Activated CD8-positive, alpha-beta memory T cell treated with anti-CD3 and anti-CD28 coated beads, Interleukin-2, amount 10 ng/mL, durations not matched to agents 7 days and 5 days (primary cell): ENCODE measurements at regions of chr19 and their contacts with region 1.

Region 1: DNA sequence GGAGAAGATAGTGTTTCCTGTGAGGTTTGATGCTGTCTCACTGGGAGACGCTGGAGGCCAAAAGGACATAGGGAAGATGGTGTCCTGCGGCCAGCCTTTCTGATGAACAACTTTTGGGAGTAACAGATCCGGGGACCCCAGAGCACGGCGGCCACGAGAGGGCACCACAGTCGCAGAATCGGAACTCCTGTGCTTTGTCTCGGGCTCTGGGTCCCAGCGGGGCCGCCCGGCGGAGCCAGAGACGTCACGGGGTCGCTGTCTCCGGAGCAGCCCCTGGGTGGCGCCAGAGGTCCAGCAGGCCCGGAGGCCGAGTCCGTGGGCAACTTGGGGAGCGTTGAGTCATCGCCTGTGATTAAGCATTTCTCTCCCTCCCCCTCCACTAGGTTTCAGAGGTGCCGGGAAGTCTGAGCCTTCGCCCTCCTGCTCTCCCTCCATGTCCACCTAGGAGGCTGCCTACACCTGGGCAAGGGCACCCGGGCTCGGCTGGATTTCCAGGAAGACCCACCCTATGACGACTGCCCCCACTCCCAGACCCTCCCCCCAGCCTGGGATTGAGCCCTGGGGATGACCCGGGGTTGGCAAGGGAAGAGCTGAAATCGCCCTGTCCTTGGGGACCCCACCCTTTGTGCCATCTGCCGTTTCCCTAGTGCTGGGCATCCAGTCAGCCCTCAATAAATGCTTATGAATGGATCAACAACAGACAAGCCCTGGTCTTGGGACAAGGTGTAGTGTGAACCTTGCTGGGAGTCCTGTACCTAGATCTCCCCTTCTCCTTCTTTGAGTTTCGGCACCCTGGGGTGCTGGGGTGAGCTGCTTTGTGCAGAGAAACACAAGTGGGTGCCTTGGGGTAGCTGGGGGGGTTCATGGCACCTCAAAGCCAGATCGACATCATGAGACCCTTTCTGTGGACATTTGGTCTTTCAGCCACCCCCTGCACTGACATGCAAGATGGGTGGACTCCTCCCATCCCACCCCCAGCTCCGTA is 3.4 kb downstream of the NANOS3 start:
- DNase-seq: peak; percentile 99
- ATAC-seq: peak; percentile 98
- H3K4me3 Mint-ChIP-seq: peak overlapping the region; percentile 25
- H3K27ac Mint-ChIP-seq: peak overlapping the region; percentile 70
- H3K4me1 Mint-ChIP-seq: peaks cover 37% of the 10 kb centered on the region
- H3K27me3 Mint-ChIP-seq: peaks cover 9% of the 10 kb centered on the region

Region 2: DNA sequence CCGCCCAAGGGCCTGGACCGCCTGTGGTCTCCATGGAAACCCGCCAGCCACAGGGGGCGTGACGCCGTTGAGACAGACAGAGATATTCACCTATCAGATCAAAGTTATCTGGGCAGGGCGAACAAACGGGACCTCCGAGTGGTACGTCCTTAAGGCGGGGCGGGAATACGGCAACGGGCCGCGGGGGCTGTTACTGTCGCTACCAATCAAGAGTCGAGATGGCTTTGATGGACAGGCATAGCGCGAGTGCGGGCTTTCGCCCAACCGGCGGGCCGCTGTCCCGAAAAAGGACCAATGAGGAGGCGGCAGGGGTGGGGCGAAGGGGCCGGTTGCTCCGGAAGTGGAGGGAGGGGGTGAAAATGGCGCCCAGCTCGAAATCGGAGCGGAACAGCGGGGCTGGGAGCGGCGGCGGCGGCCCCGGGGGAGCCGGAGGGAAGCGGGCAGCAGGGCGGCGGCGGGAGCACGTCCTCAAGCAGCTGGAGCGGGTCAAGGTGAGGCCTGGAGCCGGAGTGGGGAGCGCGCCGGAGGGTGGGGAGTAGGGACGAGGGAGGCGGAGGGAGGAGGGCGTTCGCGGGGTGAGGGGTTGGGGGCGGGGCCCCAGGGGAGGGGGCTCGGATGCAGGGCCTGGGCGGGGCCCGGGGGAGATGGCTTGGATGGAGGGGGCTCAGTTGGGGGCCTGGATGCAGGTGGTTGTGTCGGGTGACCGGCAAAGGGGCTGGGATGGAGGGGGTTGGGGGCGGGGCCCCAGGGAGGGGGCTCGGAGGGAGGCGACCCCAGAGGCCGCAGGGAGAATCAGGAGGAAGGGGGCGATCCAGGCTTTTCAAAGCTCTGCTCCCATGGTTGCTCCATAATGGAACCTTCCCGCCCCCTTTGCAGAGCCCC is 72.0 kb after region 1 on chr19 and contains the start of gene DCAF15:
- CTCF ChIA-PET with region 1: interaction called, 25 read pairs
- DNase-seq: peak; percentile 100
- ATAC-seq: peak; percentile 99
- H3K4me3 Mint-ChIP-seq: peak within 1 kb of the TSS; percentile 92
- H3K27ac Mint-ChIP-seq: peak within 1 kb of the TSS; percentile 81
- H3K4me1 Mint-ChIP-seq: peaks cover 23% of the 10 kb centered on the region
- H3K27me3 Mint-ChIP-seq: no peaks in the 10 kb centered on the region
- total RNA-seq, gene DCAF15: 82.5 to 94.3 TPM

Region 3: DNA sequence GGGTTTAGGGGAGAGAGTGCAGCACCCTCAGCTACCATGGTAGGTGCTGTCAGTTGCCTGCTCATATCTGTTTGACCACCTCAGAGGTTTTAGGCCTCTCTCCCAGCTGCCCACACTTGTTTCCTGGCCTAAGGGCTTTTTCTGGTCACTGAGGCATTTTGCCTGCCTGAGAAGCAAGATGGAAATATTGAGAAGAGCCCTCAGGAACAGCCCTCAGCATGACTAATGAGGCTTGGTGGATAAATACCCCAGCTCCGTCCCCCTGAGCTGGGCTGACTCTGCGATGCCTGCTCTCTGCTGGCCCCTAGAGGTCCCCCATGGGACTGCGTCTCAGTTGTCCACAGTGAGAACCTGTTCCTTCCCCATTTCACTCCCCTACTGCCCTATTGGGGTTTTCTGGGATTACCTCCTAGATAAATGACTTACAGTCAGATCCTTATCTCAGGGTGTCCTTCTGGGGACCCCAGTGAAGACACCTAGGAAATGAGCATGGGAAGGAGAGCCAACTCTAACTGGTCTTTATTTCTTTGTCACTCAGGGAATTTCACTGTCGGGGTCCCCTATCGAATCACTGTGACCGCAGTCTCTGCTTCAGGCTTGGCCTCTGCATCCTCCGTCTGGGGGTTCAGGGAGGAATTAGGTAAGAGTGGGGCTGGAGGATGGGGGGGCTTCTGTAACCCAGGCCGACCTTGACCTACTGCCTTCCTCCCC is 168.2 kb after region 1 on chr19:
- CTCF ChIA-PET with region 1: interaction called, 25 read pairs
- DNase-seq: peak; percentile 79
- ATAC-seq: peak; percentile 79
- H3K4me3 Mint-ChIP-seq: no peak overlapping the region
- H3K27ac Mint-ChIP-seq: no peak overlapping the region
- H3K4me1 Mint-ChIP-seq: peaks cover 2% of the 10 kb centered on the region
- H3K27me3 Mint-ChIP-seq: no peaks in the 10 kb centered on the region

Region 4: GRCh38 chr19:14073261-14073924 is 193.0 kb after region 1 on chr19:
- CTCF ChIA-PET with region 1: interaction called, 153 read pairs
- DNase-seq: peak; percentile 82
- ATAC-seq: peak; percentile 79
- H3K4me3 Mint-ChIP-seq: peak overlapping the region; percentile 84
- H3K27ac Mint-ChIP-seq: peak overlapping the region; percentile 81
- H3K4me1 Mint-ChIP-seq: peaks cover 23% of the 10 kb centered on the region
- H3K27me3 Mint-ChIP-seq: peaks cover 3% of the 10 kb centered on the region

Region 5: DNA sequence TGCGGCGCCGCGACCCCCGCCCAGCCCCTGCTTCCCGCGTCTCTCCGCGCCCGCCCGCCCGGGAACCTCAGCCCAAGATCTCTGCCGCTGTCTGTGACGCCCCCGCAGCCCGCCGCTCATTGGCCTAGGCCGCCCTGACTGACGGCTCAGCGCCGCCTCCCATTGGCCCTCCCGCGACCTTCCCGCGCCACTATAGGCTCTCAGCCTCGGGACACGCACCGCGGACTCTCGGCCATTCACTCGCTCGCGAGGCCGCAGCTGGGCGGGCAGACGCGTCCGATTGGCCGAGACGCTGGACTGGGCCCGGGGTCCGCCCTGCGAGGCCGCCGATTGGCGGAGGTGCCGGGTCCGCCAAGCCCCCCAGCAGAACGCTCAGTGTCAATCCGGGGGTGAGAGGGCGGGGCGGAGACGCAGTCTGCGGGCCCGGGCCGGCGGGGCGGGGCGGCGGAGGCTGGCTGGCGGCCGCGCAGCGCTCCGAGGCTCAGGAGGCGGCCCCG is 237.4 kb after region 1 on chr19 and contains the start of gene PRKACA:
- CTCF ChIA-PET with region 1: interaction called, 26 read pairs
- DNase-seq: peak; percentile 99
- ATAC-seq: peak; percentile 96
- H3K4me3 Mint-ChIP-seq: peak within 1 kb of the TSS; percentile 77
- H3K27ac Mint-ChIP-seq: peak within 1 kb of the TSS; percentile 66
- H3K4me1 Mint-ChIP-seq: peaks cover 42% of the 10 kb centered on the region
- H3K27me3 Mint-ChIP-seq: no peaks in the 10 kb centered on the region
- total RNA-seq, gene PRKACA: 42.3 to 65.4 TPM